ENCODE measurements at regions of chr12 and their contacts with region 1.

Region 1: DNA sequence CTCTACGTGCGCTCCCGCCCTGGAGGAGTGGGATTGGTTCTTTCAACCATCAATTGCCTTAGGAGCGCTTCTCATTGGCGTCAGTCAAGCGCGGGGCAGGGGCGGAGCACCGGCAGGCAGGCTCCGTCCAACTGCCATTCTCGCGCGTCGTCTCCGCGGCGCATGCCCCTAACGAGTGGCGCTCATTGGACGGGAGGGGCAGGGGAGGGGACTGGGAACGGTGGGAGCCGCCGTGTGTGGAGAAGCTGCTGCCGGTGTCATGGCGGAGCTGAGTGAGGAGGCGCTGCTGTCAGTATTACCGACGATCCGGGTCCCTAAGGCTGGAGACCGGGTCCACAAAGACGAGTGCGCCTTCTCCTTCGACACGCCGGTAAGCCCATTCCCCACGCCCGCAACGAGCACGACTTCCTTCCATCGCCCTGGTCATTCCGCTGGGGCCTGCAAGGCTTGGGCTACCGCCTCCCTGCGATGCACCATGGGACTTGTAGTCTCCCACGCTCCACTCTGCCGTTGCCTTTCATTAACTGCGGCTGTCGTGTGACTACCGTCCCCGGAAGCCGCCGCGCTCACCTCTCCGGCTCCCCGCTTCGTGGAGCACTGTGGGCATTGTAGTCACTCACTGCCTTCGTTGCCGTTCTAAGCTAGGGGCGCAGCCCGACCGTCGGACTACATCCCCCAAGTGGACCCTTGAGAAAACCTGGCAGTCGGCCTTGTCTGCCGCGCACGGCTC is at the start of gene USP5:
- DNase-seq: peak; percentile 98
- H3K4me3 Mint-ChIP-seq: peak within 1 kb of the TSS; percentile 91
- H3K27ac Mint-ChIP-seq: peak within 1 kb of the TSS; percentile 96
- H3K4me1 Mint-ChIP-seq: peaks cover 46% of the 10 kb centered on the region
- H3K27me3 Mint-ChIP-seq: peaks cover 2% of the 10 kb centered on the region
- total RNA-seq, gene USP5: 116 and 127 TPM in 2 replicates

Region 2: DNA sequence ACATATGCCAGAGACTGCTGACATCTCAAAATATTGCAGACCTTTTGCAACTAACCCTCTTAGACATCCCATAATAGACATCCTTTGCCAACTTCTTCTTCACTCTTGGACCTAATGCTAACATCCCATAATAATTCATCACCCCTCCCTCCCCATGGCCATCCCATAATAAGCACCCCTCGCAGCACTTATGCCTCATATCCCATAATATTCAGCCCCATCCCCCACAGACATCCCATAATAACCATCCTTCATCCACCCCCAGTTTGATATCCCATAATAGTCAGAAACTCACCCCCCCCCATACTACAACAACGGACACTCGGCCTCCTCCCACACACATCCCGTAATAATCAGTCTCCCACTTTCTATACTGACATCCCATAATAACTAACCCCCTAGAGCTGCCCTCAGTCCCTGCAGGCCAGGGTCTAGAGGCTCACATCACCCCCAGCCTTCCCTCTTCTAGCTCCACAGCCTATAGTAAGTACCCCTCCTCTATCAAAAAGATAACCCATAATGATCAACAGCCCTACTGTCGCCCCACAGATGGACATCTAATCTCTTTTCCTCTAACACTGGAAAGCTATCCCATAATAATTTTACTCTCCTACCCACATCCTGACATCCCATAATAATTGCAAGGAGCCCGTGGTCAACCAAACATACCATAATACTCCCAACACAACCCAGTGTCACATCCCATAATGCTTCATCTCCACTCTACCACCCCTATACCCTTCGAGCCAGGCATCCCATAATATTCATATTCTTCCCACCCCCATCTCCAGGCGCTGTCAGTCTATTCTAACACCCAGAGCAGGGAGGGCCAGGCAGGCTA is 244.1 kb before region 1 on chr12:
- intact Hi-C with region 1: loop called (anchors 1 kb)
- DNase-seq: peak; percentile 51
- H3K4me3 Mint-ChIP-seq: no peak overlapping the region
- H3K27ac Mint-ChIP-seq: no peak overlapping the region
- H3K4me1 Mint-ChIP-seq: peaks cover 47% of the 10 kb centered on the region
- H3K27me3 Mint-ChIP-seq: no peaks in the 10 kb centered on the region

Region 3: DNA sequence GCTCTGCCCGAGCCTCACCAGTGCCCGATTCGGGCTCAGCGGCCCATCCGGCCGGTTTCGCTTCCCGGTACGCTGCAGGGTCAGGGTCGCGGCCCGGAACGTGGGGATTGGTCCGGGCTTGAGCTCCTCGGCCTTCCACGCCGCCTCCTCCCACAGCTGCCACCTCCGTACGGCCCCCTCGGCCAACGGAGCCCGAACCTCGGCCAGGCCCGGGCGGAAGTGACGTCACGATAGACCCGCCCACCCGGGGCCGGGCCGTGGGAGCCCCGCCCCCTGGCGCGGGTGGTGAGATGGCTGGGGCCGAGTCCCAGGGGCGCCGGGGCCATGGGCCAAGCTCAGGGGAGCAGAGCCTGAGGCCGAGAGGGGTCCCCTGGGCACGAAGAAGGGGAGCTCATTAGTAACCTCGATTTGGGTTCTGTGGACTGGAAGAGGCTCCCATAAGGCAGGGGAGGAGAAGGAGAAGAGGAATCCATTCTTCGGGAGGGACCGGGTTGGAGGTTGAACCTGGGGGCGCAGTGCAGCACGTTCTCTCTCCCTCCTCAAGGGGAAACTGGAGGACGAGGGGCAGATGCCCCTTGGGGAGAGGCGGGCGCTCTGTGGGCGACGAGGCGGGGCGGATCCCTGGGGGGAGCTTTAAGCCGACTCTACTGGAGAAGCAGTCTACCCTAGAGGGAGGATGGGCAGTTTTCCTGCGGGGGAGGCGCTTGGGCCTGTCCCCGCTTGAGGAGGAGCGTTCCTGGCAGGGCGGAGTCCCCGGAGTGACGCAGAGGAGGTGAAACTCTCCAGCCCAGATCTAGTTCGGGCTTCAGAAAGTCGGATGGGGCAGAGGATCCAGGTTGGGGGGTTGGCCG is 98.9 kb before region 1 on chr12 and contains the start of gene MLF2:
- intact Hi-C with region 1: loop called (anchors 1 kb)
- DNase-seq: peak; percentile 97
- H3K4me3 Mint-ChIP-seq: peak within 1 kb of the TSS; percentile 94
- H3K27ac Mint-ChIP-seq: peak within 1 kb of the TSS; percentile 96
- H3K4me1 Mint-ChIP-seq: peaks cover 32% of the 10 kb centered on the region
- H3K27me3 Mint-ChIP-seq: no peaks in the 10 kb centered on the region
- total RNA-seq, gene MLF2: 159 and 161 TPM in 2 replicates

Region 4: GRCh38 chr12:6834873-6835272 is 17.2 kb before region 1 on chr12:
- intact Hi-C with region 1: loop called (anchors 1 kb)
- DNase-seq: no peak
- H3K4me3 Mint-ChIP-seq: no peak overlapping the region
- H3K27ac Mint-ChIP-seq: no peak overlapping the region
- H3K4me1 Mint-ChIP-seq: peaks cover 14% of the 10 kb centered on the region
- H3K27me3 Mint-ChIP-seq: peaks cover 17% of the 10 kb centered on the region

Region 5: DNA sequence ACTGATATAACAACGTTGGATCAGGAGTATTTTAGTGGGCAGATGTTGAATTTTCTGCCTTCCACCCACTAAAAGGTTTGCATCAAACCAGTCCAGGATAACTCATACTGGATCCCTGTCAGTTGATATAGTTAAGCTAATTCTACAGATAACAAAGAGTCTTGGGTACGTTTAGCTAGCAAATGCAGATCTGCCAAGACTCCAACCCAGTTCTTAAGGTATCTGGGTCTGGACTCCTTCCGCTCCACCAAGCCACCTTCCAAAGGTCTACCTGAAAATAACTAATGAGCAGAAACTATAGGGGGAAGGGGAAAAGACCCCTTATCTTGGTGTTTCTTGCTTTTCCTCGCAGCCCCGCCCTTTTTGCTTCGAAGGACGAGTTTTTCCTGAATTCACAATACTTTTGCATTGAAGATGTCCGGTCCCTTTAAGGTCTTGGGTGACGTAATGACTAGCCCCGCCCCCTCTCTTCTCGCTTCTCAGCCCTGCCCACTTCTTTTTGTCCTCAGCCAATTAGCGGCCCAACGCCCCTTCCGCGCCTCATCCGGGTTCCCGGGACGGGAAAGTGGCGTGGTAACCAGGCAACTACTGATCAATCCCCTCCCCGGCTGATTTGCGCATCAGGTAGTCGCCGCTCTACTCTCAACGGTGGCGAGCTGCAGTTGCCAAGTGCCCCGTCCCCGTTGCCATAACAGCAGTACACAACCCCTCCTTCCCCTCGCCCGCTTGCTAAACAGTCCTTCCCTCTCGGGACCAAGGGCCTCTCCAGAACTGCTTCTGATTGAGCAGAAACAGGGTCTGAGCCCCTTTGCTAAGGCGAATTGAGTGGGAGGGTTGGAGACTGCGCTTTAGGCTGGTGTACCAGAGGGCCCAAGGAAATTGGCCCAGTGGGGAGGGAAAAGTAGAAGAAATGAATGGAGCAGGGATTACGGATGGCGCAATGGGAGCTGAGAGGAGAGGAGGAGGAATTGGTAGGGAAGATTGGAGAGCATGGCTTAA is 52.5 kb after region 1 on chr12 and contains the start of gene LRRC23:
- intact Hi-C with region 1: loop called (anchors 1 kb)
- DNase-seq: peak; percentile 97
- H3K4me3 Mint-ChIP-seq: no peak within 1 kb of the TSS
- H3K27ac Mint-ChIP-seq: no peak within 1 kb of the TSS
- H3K4me1 Mint-ChIP-seq: peaks cover 8% of the 10 kb centered on the region
- H3K27me3 Mint-ChIP-seq: no peaks in the 10 kb centered on the region
- total RNA-seq, gene LRRC23: 5.3 and 5.6 TPM in 2 replicates

Region 6: DNA sequence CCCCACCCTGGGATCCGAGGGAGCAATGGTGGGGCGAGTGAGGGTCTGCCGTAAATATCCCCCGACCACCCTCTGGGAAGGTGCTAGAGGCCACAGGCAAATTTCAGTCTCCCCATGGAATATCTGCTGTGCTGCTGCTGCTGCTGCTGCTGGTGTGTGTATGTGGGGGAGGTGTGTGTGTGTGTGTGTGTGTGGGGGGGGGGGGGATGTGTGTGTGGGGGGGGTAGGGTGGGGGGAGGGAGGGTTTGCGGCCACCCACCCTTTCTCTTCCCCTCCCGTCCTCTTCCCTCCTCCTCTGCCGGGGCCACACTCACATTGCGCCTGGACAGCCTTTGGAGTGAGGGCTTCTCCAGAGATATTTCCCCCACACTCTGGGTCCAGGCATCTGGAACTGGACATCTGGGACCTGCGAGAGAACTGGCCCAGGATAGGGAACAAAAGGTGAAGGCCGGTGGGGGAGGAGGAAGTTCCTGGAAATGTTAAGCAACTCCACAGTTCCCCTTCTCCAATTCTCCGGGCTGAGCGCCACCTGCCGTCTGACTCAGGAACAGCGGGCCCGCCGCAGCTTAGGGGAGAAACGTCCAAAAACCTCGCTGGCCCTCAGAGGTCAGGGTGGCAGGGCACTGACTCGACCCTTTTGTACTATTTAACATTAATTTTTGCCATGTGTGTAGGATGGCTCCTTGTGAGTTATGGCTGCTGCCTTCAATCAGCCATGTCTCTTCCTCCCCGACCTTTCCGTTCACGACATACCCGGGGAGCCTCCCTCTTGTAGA is 256.9 kb after region 1 on chr12 and contains the start of gene C1RL:
- intact Hi-C with region 1: loop called (anchors 5 kb)
- DNase-seq: peak; percentile 71
- H3K4me3 Mint-ChIP-seq: peak within 1 kb of the TSS; percentile 94
- H3K27ac Mint-ChIP-seq: peak within 1 kb of the TSS; percentile 91
- H3K4me1 Mint-ChIP-seq: peaks cover 55% of the 10 kb centered on the region
- H3K27me3 Mint-ChIP-seq: no peaks in the 10 kb centered on the region
- total RNA-seq, gene C1RL: 21.5 and 21.8 TPM in 2 replicates

Region 7: GRCh38 chr12:7361265-7361664 is 509.2 kb after region 1 on chr12:
- intact Hi-C with region 1: no loop called
- DNase-seq: no peak
- H3K4me3 Mint-ChIP-seq: no peak overlapping the region
- H3K27ac Mint-ChIP-seq: no peak overlapping the region
- H3K4me1 Mint-ChIP-seq: no peaks in the 10 kb centered on the region
- H3K27me3 Mint-ChIP-seq: no peaks in the 10 kb centered on the region